ENCODE measurements at regions of chr4 and their contacts with region 1.

Region 1: DNA sequence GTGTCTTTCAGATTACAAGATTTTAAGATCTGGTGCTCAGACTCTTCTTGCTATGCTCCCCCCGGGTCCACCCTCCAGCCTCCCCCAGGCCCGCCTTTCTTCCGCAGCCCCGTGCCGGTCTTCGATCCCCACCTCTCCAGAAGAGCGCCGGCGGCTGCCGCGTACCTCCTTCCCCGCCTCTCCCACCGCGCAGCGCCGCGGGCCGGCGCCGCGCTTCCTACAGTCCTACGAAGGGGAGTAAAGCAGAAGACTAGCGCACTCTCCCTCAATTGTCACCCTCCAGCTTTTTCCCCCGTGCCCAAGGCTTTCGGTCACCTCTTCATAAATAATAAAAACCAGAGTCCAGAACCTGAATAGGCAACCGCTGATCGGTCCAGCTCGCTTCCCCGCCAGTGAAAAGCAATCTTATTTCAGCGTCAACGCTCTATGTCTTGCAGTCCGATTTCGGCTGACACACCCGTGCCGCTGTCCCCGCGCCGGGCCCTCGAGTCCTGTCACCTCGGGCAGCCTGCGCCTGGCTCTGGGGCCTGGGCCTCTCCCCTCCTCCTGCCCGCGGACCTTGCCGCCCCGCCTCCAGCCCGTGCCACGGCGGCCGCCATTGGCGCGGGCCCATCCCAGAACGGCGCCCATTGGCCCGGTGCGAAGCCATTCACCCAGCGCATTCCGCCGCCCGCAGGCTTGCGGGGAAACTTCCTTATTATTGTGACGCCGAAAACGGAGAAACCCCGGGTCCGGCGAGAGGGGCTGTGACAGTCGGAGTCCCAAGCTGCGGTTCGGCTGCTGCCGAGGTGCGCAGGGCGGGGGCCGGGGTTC is at the start of gene HERC3:
- DNase-seq: peak; percentile 76 to 95 (median 86)
- ATAC-seq: peak; percentile 84
- H3K4me3 ChIP-seq: peak within 1 kb of the TSS; percentile 96
- H3K4me3 Mint-ChIP-seq: peak within 1 kb of the TSS; percentile 100
- H3K27ac ChIP-seq: peak within 1 kb of the TSS; percentile 83 to 93
- H3K27ac Mint-ChIP-seq: peak within 1 kb of the TSS; percentile 99
- H3K4me1 ChIP-seq: peaks cover 23% of the 10 kb centered on the region
- H3K4me1 Mint-ChIP-seq: peaks cover 60% of the 10 kb centered on the region
- H3K27me3 ChIP-seq: no peaks in the 10 kb centered on the region
- H3K27me3 Mint-ChIP-seq: no peaks in the 10 kb centered on the region
- CTCF ChIP-seq: no peak
- total RNA-seq, gene HERC3: 63.1 to 66.4 TPM

Region 2: GRCh38 chr4:88378691-88379559 is 213.1 kb before region 1 on chr4 and contains the start of gene HERC6:
- CTCF ChIA-PET with region 1: no interaction called
- POLR2A ChIA-PET with region 1: no interaction called
- intact Hi-C with region 1: loop called in 1 of 2 experiments (anchors 10 kb)
- DNase-seq: peak; percentile 48 to 93 (median 59)
- ATAC-seq: peak; percentile 62
- H3K4me3 ChIP-seq: peak within 1 kb of the TSS; percentile 74
- H3K4me3 Mint-ChIP-seq: peak within 1 kb of the TSS; percentile 94
- H3K27ac ChIP-seq: peak within 1 kb of the TSS; percentile 47 to 89
- H3K27ac Mint-ChIP-seq: peak within 1 kb of the TSS; percentile 93
- H3K4me1 ChIP-seq: peaks cover 35% of the 10 kb centered on the region
- H3K4me1 Mint-ChIP-seq: peaks cover 48% of the 10 kb centered on the region
- H3K27me3 ChIP-seq: no peaks in the 10 kb centered on the region
- H3K27me3 Mint-ChIP-seq: no peaks in the 10 kb centered on the region
- CTCF ChIP-seq: peak; percentile 76
- total RNA-seq, gene HERC6: 9.5 to 10.6 TPM

Region 3: GRCh38 chr4:88411473-88412096 is 180.4 kb before region 1 on chr4:
- CTCF ChIA-PET with region 1: no interaction called
- POLR2A ChIA-PET with region 1: no interaction called
- intact Hi-C with region 1: no loop called
- DNase-seq: no peak
- ATAC-seq: no peak
- H3K4me3 ChIP-seq: no peak overlapping the region
- H3K4me3 Mint-ChIP-seq: no peak overlapping the region
- H3K27ac ChIP-seq: no peak overlapping the region
- H3K27ac Mint-ChIP-seq: no peak overlapping the region
- H3K4me1 ChIP-seq: no peaks in the 10 kb centered on the region
- H3K4me1 Mint-ChIP-seq: no peaks in the 10 kb centered on the region
- H3K27me3 ChIP-seq: no peaks in the 10 kb centered on the region
- H3K27me3 Mint-ChIP-seq: no peaks in the 10 kb centered on the region
- CTCF ChIP-seq: no peak

Region 4: DNA sequence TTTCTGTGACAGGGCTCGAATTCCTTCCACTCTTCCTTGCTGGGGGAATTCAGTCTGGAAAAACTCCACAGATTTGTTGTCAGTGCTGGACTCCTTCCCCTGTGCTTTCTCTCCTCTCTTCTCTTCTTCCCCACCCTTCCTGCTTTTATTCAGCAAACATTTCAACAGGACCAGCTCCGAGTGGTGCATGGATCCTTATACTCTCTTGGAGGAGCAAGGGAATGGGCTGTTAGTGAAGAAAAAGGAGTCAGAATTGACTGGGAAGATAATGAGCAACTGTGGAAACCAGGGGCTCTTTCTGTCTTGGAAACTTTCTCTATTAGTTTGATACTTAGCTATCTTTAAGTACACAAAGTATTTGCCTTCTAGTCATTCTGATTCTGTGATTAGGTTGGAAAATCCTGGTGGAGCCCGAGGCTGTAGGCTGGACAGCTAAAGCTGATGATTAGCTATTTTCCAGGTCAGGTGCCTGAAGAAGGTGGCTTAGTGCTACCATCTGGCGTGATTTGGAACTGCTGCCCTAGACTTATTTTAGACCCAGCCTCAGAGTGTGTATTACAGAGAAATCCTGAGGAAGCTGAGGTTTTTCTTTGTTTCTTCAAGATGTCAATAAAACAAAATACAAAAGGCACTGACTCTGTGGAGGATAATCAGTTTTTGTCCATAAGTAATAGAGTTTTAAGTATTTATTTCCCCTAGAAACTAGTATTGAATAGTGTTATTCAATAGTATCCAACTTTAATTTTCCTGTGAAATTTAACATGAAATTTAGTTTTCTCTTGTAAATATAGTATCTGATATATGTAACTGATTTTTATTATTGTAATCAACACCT is 67.3 kb after region 1 on chr4:
- CTCF ChIA-PET with region 1: interaction called, 6 read pairs
- POLR2A ChIA-PET with region 1: interaction called, 4 read pairs
- intact Hi-C with region 1: loop called (anchors 5 kb)
- DNase-seq: peak in 12 of 14 experiments; percentile 11 to 68 (median 28)
- ATAC-seq: peak; percentile 88
- H3K4me3 ChIP-seq: no peak overlapping the region
- H3K4me3 Mint-ChIP-seq: no peak overlapping the region
- H3K27ac ChIP-seq: no peak overlapping the region
- H3K27ac Mint-ChIP-seq: peak overlapping the region; percentile 34
- H3K4me1 ChIP-seq: no peaks in the 10 kb centered on the region
- H3K4me1 Mint-ChIP-seq: peaks cover 33% of the 10 kb centered on the region
- H3K27me3 ChIP-seq: no peaks in the 10 kb centered on the region
- H3K27me3 Mint-ChIP-seq: no peaks in the 10 kb centered on the region
- CTCF ChIP-seq: peak; percentile 68

Region 5: GRCh38 chr4:88967852-88968331 is 375.9 kb after region 1 on chr4:
- CTCF ChIA-PET with region 1: no interaction called
- POLR2A ChIA-PET with region 1: no interaction called
- intact Hi-C with region 1: no loop called
- DNase-seq: no peak
- ATAC-seq: no peak
- H3K4me3 ChIP-seq: no peak overlapping the region
- H3K4me3 Mint-ChIP-seq: no peak overlapping the region
- H3K27ac ChIP-seq: no peak overlapping the region
- H3K27ac Mint-ChIP-seq: no peak overlapping the region
- H3K4me1 ChIP-seq: no peaks in the 10 kb centered on the region
- H3K4me1 Mint-ChIP-seq: no peaks in the 10 kb centered on the region
- H3K27me3 ChIP-seq: no peaks in the 10 kb centered on the region
- H3K27me3 Mint-ChIP-seq: no peaks in the 10 kb centered on the region
- CTCF ChIP-seq: no peak